ENCODE measurements at regions of chr2 and their contacts with region 1.

Region 1: GRCh38 chr2:72993147-72993932 is 76.0 kb downstream of the EMX1 start:
- DNase-seq: no peak

Region 2: DNA sequence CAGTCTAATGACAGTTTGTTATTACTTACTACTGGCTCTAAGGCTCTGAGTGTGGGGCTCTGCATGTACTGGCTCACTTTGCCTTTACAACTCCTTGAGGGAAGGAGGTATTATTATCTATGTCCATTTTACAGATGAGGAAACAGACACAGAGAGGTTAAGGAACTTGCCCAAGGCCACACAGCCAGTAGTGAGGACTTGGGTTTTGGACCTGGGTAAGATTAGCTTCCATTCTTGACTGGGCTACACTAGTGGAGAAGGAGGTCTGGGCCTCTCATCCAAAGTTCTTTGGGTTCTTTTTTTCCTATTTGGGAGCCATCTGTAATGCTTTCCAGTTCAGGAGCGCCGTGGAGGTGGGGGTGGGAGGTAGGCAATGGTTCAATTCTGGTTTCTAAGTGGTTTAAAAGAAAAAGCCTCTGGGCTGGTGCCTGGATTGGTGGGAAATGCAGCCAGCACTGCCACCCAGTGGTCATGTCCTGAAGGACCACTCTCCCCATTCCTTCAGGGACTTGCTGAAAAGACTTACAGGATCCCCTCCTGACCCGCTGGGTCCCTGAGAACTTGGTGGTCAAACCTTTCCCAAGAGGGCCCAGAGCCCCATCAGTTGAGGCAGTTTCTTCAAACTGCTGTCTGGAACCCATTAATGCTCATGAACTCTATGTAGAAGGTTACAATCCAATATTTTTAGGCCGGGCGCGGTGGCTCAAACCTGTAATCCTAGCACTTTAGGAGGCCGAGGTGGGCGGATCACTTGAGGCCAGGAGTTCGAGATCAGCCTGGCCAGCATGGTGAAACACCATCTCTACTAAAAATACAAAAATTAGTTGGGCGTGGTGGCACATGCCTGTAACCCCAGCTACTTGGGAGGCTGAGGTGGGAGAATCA is 170.4 kb after region 1 on chr2:
- intact Hi-C with region 1: loop called (anchors 2 kb)
- DNase-seq: no peak

Region 3: GRCh38 chr2:73176881-73177644 is 183.7 kb after region 1 on chr2:
- intact Hi-C with region 1: loop called (anchors 5 kb)
- DNase-seq: peak; percentile 92

Measured in cardiac septum (tissue), 1 donor.